BJ (cell line): ENCODE measurements at regions of chr5 and their contacts with region 1.

Region 1: GRCh38 chr5:177454397-177455035 is 7.9 kb downstream of the PRR7 start:
- DNase-seq: no peak
- H3K4me3 ChIP-seq: peak overlapping the region; percentile 41
- H3K27me3 ChIP-seq: no peaks in the 10 kb centered on the region
- CTCF ChIP-seq: peak; percentile 62

Region 2: GRCh38 chr5:175885813-175886212 is 1568.7 kb before region 1 on chr5:
- CTCF ChIA-PET with region 1: no interaction called
- POLR2A ChIA-PET with region 1: no interaction called
- DNase-seq: no peak
- H3K4me3 ChIP-seq: no peak overlapping the region
- H3K27me3 ChIP-seq: no peaks in the 10 kb centered on the region
- CTCF ChIP-seq: no peak

Region 3: DNA sequence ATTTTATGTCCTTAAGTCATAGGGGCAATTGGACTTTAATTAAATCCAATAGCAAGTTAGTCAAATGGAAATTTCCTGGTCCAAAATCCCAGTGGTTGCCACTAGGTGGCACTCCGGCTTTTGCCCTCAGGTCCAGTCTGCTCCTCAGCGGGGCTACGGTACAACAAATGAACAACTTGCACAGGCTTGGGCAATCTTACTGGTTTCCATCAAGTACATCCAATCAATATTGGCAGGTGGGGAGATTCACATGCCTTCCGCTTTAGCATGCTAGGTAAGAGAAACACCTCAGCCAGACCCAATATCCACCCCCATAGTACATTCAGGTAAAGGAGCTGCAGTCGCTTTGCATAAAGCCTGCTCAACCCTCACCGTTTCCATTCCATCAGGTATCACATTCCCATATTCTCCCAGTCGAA is 136.5 kb before region 1 on chr5:
- CTCF ChIA-PET with region 1: interaction called, 38 read pairs
- POLR2A ChIA-PET with region 1: no interaction called
- DNase-seq: no peak
- H3K4me3 ChIP-seq: no peak overlapping the region
- H3K27me3 ChIP-seq: no peaks in the 10 kb centered on the region
- CTCF ChIP-seq: peak; percentile 92

Region 4: DNA sequence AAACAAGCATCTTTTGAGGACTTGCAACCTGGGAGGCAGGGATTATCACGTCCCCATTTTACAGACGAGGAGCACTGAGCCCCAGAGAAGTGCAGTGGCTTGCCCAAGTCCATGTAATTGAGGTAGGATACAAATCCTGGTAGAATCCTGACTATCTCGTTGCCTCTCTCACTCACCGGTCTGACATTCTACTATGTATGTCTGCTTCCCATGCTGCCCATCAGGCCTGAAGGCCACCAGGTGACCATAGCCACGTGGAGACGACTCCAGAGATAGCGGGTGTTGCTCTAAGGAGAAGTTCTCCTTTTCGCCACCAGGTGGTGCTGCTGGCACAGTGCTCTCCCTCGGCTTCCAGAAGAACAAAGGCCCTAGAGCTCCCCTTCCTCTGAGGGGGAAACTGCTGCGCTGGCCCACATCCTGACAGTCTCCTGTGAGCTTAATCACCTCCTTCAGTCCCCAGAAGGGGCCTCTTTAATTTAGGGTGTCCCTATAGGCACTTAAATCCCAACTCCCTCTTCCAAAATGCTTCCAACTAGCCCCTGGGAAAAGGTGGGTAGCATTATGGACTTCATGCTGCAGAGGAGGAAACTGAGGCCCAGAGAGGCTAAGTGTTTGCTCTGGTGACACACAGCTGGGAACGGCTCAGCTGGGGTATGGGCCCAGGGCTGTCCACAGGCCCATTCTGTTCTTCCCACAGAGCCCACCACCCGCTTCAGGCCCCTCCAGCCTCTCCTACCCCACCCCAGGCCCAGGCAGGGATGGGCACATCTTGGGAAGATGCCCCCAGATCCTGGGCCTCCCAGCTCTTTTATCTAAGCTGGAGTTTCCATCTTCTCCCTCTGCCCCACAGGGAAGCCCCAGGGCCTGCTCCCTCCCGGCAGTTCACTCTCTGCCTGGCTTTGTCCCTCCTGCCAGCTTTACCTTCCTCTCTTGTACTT is 63.9 kb before region 1 on chr5:
- CTCF ChIA-PET with region 1: interaction called, 217 read pairs
- POLR2A ChIA-PET with region 1: no interaction called
- DNase-seq: no peak
- H3K4me3 ChIP-seq: no peak overlapping the region
- H3K27me3 ChIP-seq: peaks cover 11% of the 10 kb centered on the region
- CTCF ChIP-seq: peak; percentile 95

Region 5: DNA sequence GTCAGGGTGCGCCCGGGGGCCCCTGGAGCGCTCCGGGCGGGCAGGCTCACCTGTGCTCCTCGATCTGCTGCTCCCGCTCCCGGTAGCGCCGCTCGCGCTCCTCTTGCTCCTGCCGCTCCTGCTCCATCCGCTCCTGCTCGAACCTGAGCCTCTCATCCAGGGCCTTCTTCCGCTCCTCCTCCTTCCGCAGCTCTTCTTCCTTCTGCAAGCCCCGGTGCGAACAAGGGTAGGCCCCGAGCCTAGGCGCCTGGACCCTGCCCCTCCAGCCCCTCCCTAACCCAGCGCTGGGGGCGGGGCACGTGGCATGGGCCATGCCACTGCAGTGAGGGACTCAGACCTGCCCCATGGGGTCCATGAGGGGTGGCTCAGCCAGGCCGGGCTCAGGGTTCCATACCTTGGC is 12.3 kb after region 1 on chr5:
- CTCF ChIA-PET with region 1: interaction called, 35 read pairs
- POLR2A ChIA-PET with region 1: no interaction called
- DNase-seq: no peak
- H3K4me3 ChIP-seq: no peak overlapping the region
- H3K27me3 ChIP-seq: no peaks in the 10 kb centered on the region
- CTCF ChIP-seq: no peak